ENCODE measurements at regions of chr5 and their contacts with region 1.

Region 1: DNA sequence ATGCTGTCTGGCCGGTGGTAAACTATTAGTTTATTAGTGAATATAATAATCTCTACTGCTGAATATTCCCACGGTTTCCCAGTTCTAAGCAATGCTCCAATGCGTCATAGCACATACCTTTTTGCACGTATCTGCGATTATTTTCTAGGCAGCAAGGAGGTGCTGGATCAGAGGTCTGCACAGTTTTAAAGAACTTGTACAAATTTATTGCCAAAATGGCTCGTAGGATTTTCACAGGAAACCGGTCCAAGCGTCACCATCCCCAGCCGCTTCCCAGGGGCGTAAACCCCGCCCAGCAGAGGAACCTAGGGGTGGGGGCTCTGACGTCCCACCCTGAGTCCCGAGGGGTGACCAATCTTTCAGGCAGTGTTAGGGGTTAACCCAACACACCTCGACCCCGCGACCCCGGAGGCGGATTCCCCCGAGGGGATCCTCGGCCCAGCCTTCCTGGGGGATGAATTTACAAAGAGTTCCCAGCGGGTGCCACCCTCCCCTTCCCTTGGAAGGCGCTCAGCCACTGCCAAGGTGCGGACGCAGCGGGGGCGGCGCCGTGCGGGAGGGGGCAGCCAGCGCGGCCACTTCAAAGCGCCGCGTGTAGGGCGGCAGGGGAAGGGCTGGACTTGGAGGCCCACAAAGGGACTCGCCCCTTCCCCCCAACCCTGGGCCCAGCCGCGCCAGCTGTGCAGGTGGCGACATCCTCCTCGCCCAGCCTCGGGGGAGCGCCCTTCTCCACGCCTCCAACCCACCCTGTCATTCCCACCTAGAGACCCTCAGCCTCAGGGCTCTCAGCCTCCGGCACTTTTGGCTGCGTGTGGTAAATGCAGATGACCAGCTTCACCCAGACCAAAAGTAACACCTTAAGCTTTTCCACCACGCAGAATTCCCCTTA is 43.5 kb upstream of the TCF7 start:
- DNase-seq: peak in 5 of 9 experiments; percentile 32 to 59 (median 42)
- ATAC-seq: peak; percentile 53
- H3K4me3 ChIP-seq: peak overlapping the region; percentile 40 to 44
- H3K4me3 Mint-ChIP-seq: peak overlapping the region; percentile 79
- H3K27ac ChIP-seq: no peak overlapping the region
- H3K27ac Mint-ChIP-seq: peak overlapping the region; percentile 92
- H3K4me1 ChIP-seq: peaks cover 67% of the 10 kb centered on the region
- H3K4me1 Mint-ChIP-seq: peaks cover 69% of the 10 kb centered on the region
- H3K27me3 ChIP-seq: peaks cover 0 to 3% of the 10 kb centered on the region in 2 experiments
- H3K27me3 Mint-ChIP-seq: no peaks in the 10 kb centered on the region
- CTCF ChIP-seq: peak; percentile 13

Region 2: GRCh38 chr5:134053840-134054338 is 17.1 kb before region 1 on chr5:
- CTCF ChIA-PET with region 1: interaction called, 6 read pairs
- POLR2A ChIA-PET with region 1: interaction called, 5 read pairs
- intact Hi-C with region 1: loop called in 1 of 2 experiments (anchors 2 kb)
- DNase-seq: peak in 1 of 9 experiments; percentile 56
- ATAC-seq: peak; percentile 82
- H3K4me3 ChIP-seq: no peak overlapping the region
- H3K4me3 Mint-ChIP-seq: peak overlapping the region; percentile 44
- H3K27ac ChIP-seq: no peak overlapping the region
- H3K27ac Mint-ChIP-seq: peak overlapping the region; percentile 87
- H3K4me1 ChIP-seq: peaks cover 49% of the 10 kb centered on the region
- H3K4me1 Mint-ChIP-seq: peaks cover 52% of the 10 kb centered on the region
- H3K27me3 ChIP-seq: no peaks in the 10 kb centered on the region
- H3K27me3 Mint-ChIP-seq: no peaks in the 10 kb centered on the region
- CTCF ChIP-seq: no peak

Region 3: GRCh38 chr5:134086943-134087305 is 16.0 kb after region 1 on chr5:
- CTCF ChIA-PET with region 1: interaction called, 18 read pairs
- POLR2A ChIA-PET with region 1: interaction called, 7 read pairs
- intact Hi-C with region 1: loop called in 1 of 2 experiments (anchors 2 kb)
- DNase-seq: peak; percentile 51 to 88 (median 81)
- ATAC-seq: peak; percentile 68
- H3K4me3 ChIP-seq: peak overlapping the region in 1 of 2 experiments; percentile 5
- H3K4me3 Mint-ChIP-seq: peak overlapping the region; percentile 64
- H3K27ac ChIP-seq: peak overlapping the region; percentile 16 to 28
- H3K27ac Mint-ChIP-seq: peak overlapping the region; percentile 89
- H3K4me1 ChIP-seq: peaks cover 87% of the 10 kb centered on the region
- H3K4me1 Mint-ChIP-seq: peaks cover 85% of the 10 kb centered on the region
- H3K27me3 ChIP-seq: peaks cover 0 to 2% of the 10 kb centered on the region in 2 experiments
- H3K27me3 Mint-ChIP-seq: no peaks in the 10 kb centered on the region
- CTCF ChIP-seq: no peak

Region 4: GRCh38 chr5:134092878-134093277 is 21.9 kb after region 1 on chr5:
- CTCF ChIA-PET with region 1: interaction called, 18 read pairs
- POLR2A ChIA-PET with region 1: interaction called, 4 read pairs
- intact Hi-C with region 1: no loop called
- DNase-seq: peak in 1 of 9 experiments; percentile 25
- ATAC-seq: no peak
- H3K4me3 ChIP-seq: no peak overlapping the region
- H3K4me3 Mint-ChIP-seq: peak overlapping the region; percentile 40
- H3K27ac ChIP-seq: no peak overlapping the region
- H3K27ac Mint-ChIP-seq: peak overlapping the region; percentile 90
- H3K4me1 ChIP-seq: peaks cover 96% of the 10 kb centered on the region
- H3K4me1 Mint-ChIP-seq: peaks cover 88% of the 10 kb centered on the region
- H3K27me3 ChIP-seq: no peaks in the 10 kb centered on the region
- H3K27me3 Mint-ChIP-seq: no peaks in the 10 kb centered on the region
- CTCF ChIP-seq: no peak

Region 5: DNA sequence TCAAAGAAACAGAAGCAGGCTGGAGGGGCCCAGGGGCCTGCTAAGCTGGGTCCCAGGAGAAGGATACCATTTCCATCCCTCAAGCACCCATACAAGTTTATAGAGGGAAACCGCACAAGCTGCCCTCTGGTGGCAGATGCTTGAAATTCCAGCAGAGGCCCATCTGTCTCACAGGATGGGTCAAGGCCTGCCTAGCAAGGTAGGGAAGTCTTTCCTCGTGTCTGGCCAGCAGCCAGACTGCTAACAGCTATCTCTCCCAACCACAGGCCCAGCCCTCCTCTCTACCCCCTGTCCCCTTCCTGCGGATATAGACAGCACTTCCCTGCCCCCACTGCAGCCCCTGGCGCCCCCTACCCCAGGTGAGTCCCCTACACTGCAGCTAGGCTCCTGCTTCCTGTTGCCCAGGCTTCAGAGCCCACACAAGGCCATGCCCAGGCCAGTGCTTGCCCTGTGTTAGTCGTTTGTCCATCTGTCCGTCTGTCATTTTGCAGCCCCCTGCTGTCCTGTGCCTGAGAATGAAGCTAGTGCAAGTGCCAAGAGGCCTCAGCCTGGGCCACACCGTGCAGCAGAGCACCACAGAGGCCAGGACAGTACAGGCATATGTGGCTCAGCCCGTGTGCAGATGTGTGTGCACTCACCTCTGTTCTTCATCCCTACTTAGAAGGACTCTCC is 69.7 kb after region 1 on chr5:
- CTCF ChIA-PET with region 1: interaction called, 3 read pairs
- POLR2A ChIA-PET with region 1: no interaction called
- intact Hi-C with region 1: loop called in 1 of 2 experiments (anchors 1 kb)
- DNase-seq: peak in 7 of 9 experiments; percentile 3 to 83 (median 67)
- ATAC-seq: peak; percentile 39
- H3K4me3 ChIP-seq: no peak overlapping the region
- H3K4me3 Mint-ChIP-seq: peak overlapping the region; percentile 22
- H3K27ac ChIP-seq: peak overlapping the region; percentile 30 to 88
- H3K27ac Mint-ChIP-seq: peak overlapping the region; percentile 96
- H3K4me1 ChIP-seq: peaks cover 58% of the 10 kb centered on the region
- H3K4me1 Mint-ChIP-seq: peaks cover 80% of the 10 kb centered on the region
- H3K27me3 ChIP-seq: no peaks in the 10 kb centered on the region
- H3K27me3 Mint-ChIP-seq: no peaks in the 10 kb centered on the region
- CTCF ChIP-seq: peak; percentile 76